ENCODE measurements at regions of chr11 and their contacts with region 1.

Region 1: GRCh38 chr11:119196833-119197483 is 9.2 kb upstream of the CBL start:
- DNase-seq: no peak
- ATAC-seq: peak; percentile 82 to 87
- H3K4me3 ChIP-seq: no peak overlapping the region
- H3K27ac ChIP-seq: no peak overlapping the region
- H3K4me1 ChIP-seq: no peaks in the 10 kb centered on the region
- H3K27me3 ChIP-seq: no peaks in the 10 kb centered on the region

Region 2: GRCh38 chr11:119044708-119045107 is 152.2 kb before region 1 on chr11:
- intact Hi-C with region 1: no loop called
- DNase-seq: no peak
- ATAC-seq: no peak
- H3K4me3 ChIP-seq: no peak overlapping the region
- H3K27ac ChIP-seq: no peak overlapping the region
- H3K4me1 ChIP-seq: no peaks in the 10 kb centered on the region
- H3K27me3 ChIP-seq: no peaks in the 10 kb centered on the region

Region 3: GRCh38 chr11:119144825-119145486 is 52.0 kb before region 1 on chr11:
- intact Hi-C with region 1: loop called in 1 of 4 experiments (anchors 1 kb)
- DNase-seq: peak; percentile 70 to 81 (median 76)
- ATAC-seq: peak; percentile 81 to 89
- H3K4me3 ChIP-seq: no peak overlapping the region
- H3K27ac ChIP-seq: no peak overlapping the region
- H3K4me1 ChIP-seq: peaks cover 2% of the 10 kb centered on the region
- H3K27me3 ChIP-seq: no peaks in the 10 kb centered on the region

Region 4: DNA sequence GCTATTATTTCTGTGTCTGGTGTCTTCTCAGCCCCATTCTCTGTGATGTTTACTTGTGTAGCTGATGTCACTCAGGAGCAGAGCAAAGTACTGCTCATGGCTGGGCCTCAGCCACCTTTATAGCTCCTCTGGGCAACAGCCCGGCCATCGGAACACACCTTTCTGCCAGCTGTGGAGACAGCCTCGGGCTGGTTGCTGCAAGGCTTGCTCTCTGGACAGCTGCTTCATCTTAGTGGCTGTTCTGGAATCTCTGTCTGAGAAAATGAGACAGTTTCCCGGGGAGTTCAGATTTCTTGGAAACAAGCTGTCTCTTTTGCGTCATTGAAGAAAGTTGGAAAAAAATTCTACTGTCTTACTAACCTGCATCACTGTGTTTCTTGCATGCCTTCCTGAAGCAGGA is 206.1 kb after region 1 on chr11:
- intact Hi-C with region 1: no loop called
- DNase-seq: no peak
- ATAC-seq: no peak
- H3K4me3 ChIP-seq: no peak overlapping the region
- H3K27ac ChIP-seq: no peak overlapping the region
- H3K4me1 ChIP-seq: no peaks in the 10 kb centered on the region
- H3K27me3 ChIP-seq: no peaks in the 10 kb centered on the region